ENCODE measurements at regions of chr10 and their contacts with region 1.

Region 1: DNA sequence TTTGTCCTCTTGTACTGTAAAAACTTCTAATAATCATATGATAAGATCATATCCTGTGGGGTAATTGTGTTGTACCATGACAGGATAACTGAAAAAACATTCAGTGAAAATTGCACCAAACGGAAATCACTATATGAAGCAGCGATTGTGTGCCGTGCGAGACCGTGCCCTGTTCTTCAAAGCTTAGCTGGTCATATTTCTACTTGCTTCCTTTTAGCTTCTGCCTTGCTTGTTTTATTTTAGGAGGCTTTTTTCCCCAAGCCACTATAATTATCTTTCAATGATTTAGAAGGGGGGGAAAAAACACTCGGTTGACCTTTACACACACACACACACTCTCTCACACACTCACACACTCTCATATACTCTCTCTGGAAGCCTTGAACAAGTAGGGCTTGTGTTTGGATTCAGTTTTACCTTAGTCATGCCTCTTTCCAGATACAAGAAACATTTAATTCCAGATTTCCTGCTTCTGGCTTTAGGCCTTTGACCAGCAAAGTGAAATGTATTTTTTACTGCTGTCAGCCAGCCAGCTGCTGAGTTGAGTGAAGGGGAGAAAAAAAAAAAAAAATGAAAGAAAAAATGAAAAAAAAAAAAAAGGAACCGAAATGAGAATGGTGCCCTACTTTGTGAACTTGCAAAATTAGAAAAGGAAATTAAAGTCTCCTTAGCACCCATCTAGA is 181.4 kb downstream of the ARID5B start:
- DNase-seq: peak; percentile 80
- H3K4me3 ChIP-seq: peak overlapping the region; percentile 17
- H3K27ac ChIP-seq: peak overlapping the region; percentile 95
- H3K4me1 ChIP-seq: peaks cover 57% of the 10 kb centered on the region
- H3K27me3 ChIP-seq: no peaks in the 10 kb centered on the region
- CTCF ChIP-seq: no peak

Region 2: DNA sequence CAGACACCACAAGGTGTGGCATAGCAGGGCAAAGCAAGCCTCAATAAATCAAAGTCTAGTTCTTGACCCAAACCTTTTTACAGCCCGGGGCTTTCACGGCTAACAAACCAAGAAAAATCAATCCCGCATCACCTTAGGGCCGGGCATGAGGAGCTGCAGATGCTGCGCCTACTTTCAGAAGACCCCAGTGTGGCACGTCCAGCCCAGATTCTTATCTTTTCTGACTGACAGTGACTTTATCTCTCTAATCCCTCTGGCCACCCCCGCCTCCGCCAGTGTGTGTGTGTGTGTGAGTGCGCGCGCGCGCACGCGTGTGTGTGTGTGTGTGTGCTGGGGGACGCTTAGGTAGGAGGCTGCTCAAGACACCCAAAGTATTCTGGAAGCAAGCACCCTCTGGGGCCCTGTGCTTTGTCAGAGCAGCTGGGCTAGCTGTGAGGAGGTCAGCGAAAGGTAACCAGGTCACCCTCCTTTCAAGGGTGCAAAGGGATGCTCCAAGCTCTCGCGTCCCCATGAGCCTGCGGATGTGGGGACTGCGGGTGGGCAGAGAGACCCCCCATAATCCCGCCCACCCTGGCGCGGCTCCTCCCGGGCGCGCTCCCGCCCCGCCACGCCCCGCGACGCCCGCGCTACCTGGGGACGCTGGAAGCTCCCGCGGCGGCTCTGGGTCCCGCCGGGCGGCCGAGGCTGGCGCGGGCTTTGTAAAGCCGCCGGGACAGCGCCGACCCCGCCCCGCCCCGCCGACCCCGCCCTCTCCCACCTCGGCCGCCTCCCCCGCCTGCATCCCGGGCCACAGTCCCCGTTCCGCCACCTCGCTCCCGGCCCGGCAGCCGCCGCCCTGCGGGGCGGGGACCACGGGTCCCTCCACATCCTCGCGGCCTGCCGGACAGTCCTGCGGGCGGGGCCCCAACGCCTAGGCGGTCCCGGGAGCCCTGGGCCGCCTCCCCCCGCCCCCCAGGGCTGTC is 1081.8 kb before region 1 on chr10:
- CTCF ChIA-PET with region 1: no interaction called
- POLR2A ChIA-PET with region 1: no interaction called
- intact Hi-C with region 1: no loop called
- DNase-seq: peak; percentile 43
- H3K4me3 ChIP-seq: peak overlapping the region; percentile 43
- H3K27ac ChIP-seq: no peak overlapping the region
- H3K4me1 ChIP-seq: peaks cover 30% of the 10 kb centered on the region
- H3K27me3 ChIP-seq: no peaks in the 10 kb centered on the region
- CTCF ChIP-seq: no peak

Region 3: GRCh38 chr10:62038609-62039190 is 44.2 kb before region 1 on chr10:
- CTCF ChIA-PET with region 1: no interaction called
- POLR2A ChIA-PET with region 1: no interaction called
- intact Hi-C with region 1: loop called (anchors 2 kb)
- DNase-seq: peak; percentile 93
- H3K4me3 ChIP-seq: peak overlapping the region; percentile 5
- H3K27ac ChIP-seq: peak overlapping the region; percentile 79
- H3K4me1 ChIP-seq: peaks cover 85% of the 10 kb centered on the region
- H3K27me3 ChIP-seq: no peaks in the 10 kb centered on the region
- CTCF ChIP-seq: peak; percentile 94

Region 4: GRCh38 chr10:62048919-62049623 is 33.8 kb before region 1 on chr10:
- CTCF ChIA-PET with region 1: no interaction called
- POLR2A ChIA-PET with region 1: no interaction called
- intact Hi-C with region 1: loop called (anchors 2 kb)
- DNase-seq: peak; percentile 89
- H3K4me3 ChIP-seq: peak overlapping the region; percentile 53
- H3K27ac ChIP-seq: peak overlapping the region; percentile 89
- H3K4me1 ChIP-seq: peaks cover 61% of the 10 kb centered on the region
- H3K27me3 ChIP-seq: no peaks in the 10 kb centered on the region
- CTCF ChIP-seq: no peak

Region 5: GRCh38 chr10:62109587-62110293 is 26.9 kb after region 1 on chr10:
- CTCF ChIA-PET with region 1: no interaction called
- POLR2A ChIA-PET with region 1: interaction called, 15 read pairs
- intact Hi-C with region 1: no loop called
- DNase-seq: no peak
- H3K4me3 ChIP-seq: no peak overlapping the region
- H3K27ac ChIP-seq: no peak overlapping the region
- H3K4me1 ChIP-seq: peaks cover 12% of the 10 kb centered on the region
- H3K27me3 ChIP-seq: no peaks in the 10 kb centered on the region
- CTCF ChIP-seq: no peak

Region 6: GRCh38 chr10:62193479-62193878 is 110.6 kb after region 1 on chr10:
- CTCF ChIA-PET with region 1: interaction called, 5 read pairs
- POLR2A ChIA-PET with region 1: no interaction called
- intact Hi-C with region 1: loop called (anchors 1 kb)
- DNase-seq: peak; percentile 68
- H3K4me3 ChIP-seq: no peak overlapping the region
- H3K27ac ChIP-seq: peak overlapping the region; percentile 89
- H3K4me1 ChIP-seq: peaks cover 61% of the 10 kb centered on the region
- H3K27me3 ChIP-seq: no peaks in the 10 kb centered on the region
- CTCF ChIP-seq: peak; percentile 35; the same call in 1 of the 2 replicates

Region 7: DNA sequence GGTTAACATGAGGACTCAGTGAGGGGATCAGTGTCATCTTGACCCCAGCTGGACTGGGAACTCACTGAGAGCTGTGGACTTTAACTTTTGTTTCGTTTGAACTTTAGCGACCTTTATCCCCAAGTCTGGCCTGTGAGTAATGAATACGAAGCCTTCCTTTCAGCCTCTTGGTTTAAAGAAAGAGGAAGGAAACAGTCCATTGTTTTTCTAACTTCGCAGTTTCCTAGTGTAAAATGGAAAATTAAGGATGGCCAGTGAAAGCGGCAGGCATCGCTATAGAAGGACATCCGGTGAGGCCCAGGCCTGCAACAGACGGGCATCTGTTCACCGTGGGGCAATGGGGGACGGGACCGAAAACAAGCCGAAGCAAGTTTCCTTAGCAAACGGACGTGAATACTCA is 677.5 kb after region 1 on chr10:
- CTCF ChIA-PET with region 1: no interaction called
- POLR2A ChIA-PET with region 1: no interaction called
- intact Hi-C with region 1: no loop called
- DNase-seq: no peak
- H3K4me3 ChIP-seq: no peak overlapping the region
- H3K27ac ChIP-seq: no peak overlapping the region
- H3K4me1 ChIP-seq: no peaks in the 10 kb centered on the region
- H3K27me3 ChIP-seq: no peaks in the 10 kb centered on the region
- CTCF ChIP-seq: no peak

Measured in A673 (cell line).